Heart left ventricle (tissue), 16 donors: ENCODE measurements at regions of chr2 and their contacts with region 1.

Region 1: GRCh38 chr2:52404866-52405265 is 1362.7 kb upstream of the CHAC2 start:
- DNase-seq: no peak
- ATAC-seq: no peak
- H3K4me3 ChIP-seq: no peak overlapping the region
- H3K27ac ChIP-seq: no peak overlapping the region
- H3K4me1 ChIP-seq: no peaks in the 10 kb centered on the region
- H3K27me3 ChIP-seq: no peaks in the 10 kb centered on the region
- CTCF ChIP-seq: no peak
- POLR2A ChIP-seq: no peak

Region 2: DNA sequence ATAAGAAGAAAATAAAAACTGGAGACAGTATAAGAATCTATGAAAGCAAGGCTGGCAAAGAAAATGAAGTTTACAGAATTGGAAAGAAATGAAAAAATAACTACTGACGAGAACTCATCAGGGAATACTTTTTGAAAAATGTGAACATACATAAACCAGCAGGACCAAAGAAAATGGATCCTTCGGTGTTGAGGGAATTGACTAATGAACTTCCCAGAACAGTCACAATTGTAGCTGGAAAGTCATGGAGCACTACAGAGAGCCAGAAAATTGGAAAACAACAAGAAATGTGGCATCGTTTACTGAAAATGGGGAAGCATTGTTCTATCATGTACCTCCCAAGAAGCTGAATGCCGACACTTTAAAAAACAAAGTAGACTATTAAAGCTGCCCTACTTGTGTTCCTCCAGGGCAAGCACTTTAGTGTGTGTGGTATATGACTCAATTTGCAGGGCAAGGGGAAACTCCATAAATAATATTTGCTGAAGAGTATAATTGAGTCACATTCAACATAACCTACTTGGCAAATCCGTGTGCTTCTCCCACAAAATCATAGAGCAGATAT is 151.4 kb before region 1 on chr2:
- intact Hi-C with region 1: no loop called
- DNase-seq: no peak
- ATAC-seq: no peak
- H3K4me3 ChIP-seq: no peak overlapping the region
- H3K27ac ChIP-seq: no peak overlapping the region
- H3K4me1 ChIP-seq: no peaks in the 10 kb centered on the region
- H3K27me3 ChIP-seq: no peaks in the 10 kb centered on the region
- CTCF ChIP-seq: no peak
- POLR2A ChIP-seq: no peak

Region 3: DNA sequence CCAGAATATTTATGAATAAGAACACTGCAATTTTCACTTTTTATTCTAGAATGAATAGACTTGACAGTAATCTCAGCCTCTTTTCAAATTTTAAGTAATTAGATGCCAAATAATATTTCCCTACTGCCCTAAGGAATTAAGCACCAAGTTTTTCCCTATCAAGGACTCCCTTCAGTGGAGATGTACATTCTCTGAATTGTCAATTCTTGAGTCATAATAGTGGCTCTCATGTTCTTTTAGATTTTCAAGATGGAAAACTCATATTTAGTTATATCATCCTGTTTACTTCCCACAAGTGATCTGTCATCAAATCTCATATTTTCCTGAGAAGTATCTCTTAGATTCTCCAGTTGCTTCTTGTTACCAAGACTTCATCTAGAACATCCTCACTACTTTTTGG is 113.8 kb after region 1 on chr2:
- intact Hi-C with region 1: no loop called
- DNase-seq: no peak
- ATAC-seq: no peak
- H3K4me3 ChIP-seq: no peak overlapping the region
- H3K27ac ChIP-seq: no peak overlapping the region
- H3K4me1 ChIP-seq: no peaks in the 10 kb centered on the region
- H3K27me3 ChIP-seq: no peaks in the 10 kb centered on the region
- CTCF ChIP-seq: no peak
- POLR2A ChIP-seq: no peak

Region 4: DNA sequence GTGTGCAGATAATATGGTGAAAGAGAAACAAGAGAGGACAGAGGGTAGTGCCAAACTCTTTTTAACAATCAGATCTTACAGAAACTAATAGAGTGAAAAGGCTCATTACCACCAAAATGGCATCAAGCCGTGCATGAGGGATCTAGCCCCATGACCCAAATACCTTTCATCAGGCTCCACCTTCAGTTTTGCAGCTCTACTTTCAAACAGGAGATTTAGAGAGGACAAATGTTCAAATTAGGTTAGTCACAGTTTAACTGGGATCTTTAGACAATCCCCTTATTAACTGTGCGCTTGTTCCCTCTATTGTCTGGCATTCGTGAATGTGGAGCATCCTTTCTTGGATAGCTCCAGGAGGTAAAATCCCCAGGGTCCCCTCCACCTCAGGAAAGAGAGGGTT is 153.4 kb after region 1 on chr2:
- intact Hi-C with region 1: no loop called
- DNase-seq: no peak
- ATAC-seq: no peak
- H3K4me3 ChIP-seq: no peak overlapping the region
- H3K27ac ChIP-seq: no peak overlapping the region
- H3K4me1 ChIP-seq: no peaks in the 10 kb centered on the region
- H3K27me3 ChIP-seq: no peaks in the 10 kb centered on the region
- CTCF ChIP-seq: no peak
- POLR2A ChIP-seq: no peak

Region 5: GRCh38 chr2:52862801-52863200 is 457.9 kb after region 1 on chr2:
- intact Hi-C with region 1: loop called in 1 of 10 experiments (anchors 5 kb)
- DNase-seq: no peak
- ATAC-seq: no peak
- H3K4me3 ChIP-seq: no peak overlapping the region
- H3K27ac ChIP-seq: no peak overlapping the region
- H3K4me1 ChIP-seq: peaks cover 0 to 3% (median 0%) of the 10 kb centered on the region in 12 donors
- H3K27me3 ChIP-seq: no peaks in the 10 kb centered on the region
- CTCF ChIP-seq: no peak
- POLR2A ChIP-seq: no peak